ENCODE measurements at regions of chr12 and their contacts with region 1.

Region 1: DNA sequence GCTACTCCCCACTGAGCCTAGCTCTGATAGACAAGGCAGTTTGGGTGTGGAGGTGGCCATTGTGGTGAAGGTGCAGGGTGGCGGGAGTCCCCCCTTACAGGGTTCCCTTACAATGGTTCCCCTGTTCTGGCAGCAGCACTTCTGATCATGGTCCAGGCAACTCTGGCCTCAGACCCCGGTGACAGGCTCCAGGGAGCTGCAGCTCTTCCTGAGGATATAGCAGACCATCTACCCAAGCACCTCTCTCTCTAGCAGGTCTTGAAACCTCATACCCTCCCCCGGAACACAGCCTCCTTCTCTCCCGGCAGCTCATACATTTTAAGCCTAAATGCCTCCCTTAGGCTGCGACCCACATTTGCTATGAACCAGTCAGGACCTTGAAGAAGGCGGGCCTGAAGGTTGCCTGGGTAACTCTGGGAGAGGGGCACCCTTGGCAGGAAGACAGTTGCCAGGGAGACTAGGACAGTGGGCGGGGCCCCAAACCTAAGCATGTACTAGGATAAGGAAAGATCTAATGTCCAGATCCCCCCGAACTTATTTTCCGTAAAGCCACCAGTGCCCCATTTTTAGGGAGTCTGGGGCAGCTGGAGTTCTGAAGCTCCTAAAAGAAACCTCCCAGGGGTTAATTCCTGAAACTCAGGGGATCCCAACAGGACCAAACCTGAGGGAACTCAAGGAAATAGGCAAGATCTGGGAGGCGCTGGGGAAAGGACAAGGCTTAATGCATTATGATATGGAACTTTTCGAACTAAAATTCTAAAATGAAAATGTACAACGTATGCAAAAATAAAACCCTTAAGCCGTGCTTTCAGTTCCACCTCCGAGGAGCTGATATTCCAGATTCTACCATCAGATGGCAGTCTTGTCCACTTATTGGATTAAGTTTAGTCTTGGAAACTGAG is 4.5 kb upstream of the GDF11 start:
- DNase-seq: peak; percentile 96
- H3K4me3 ChIP-seq: peak overlapping the region; percentile 72
- H3K27ac ChIP-seq: peak overlapping the region; percentile 66
- H3K4me1 ChIP-seq: peaks cover 26% of the 10 kb centered on the region
- CTCF ChIP-seq: peak; percentile 94

Region 2: GRCh38 chr12:54935235-54935951 is 803.0 kb before region 1 on chr12:
- CTCF ChIA-PET with region 1: no interaction called
- POLR2A ChIA-PET with region 1: no interaction called
- intact Hi-C with region 1: no loop called
- DNase-seq: peak; percentile 41
- H3K4me3 ChIP-seq: no peak overlapping the region
- H3K27ac ChIP-seq: no peak overlapping the region
- H3K4me1 ChIP-seq: peaks cover 13% of the 10 kb centered on the region
- CTCF ChIP-seq: peak; percentile 27; the same call in 1 of the 2 replicates

Region 3: GRCh38 chr12:55659486-55660385 is 78.6 kb before region 1 on chr12:
- CTCF ChIA-PET with region 1: no interaction called
- POLR2A ChIA-PET with region 1: no interaction called
- intact Hi-C with region 1: loop called (anchors 1 kb)
- DNase-seq: peak; percentile 61
- H3K4me3 ChIP-seq: no peak overlapping the region
- H3K27ac ChIP-seq: no peak overlapping the region
- H3K4me1 ChIP-seq: no peaks in the 10 kb centered on the region
- CTCF ChIP-seq: peak; percentile 84

Region 4: DNA sequence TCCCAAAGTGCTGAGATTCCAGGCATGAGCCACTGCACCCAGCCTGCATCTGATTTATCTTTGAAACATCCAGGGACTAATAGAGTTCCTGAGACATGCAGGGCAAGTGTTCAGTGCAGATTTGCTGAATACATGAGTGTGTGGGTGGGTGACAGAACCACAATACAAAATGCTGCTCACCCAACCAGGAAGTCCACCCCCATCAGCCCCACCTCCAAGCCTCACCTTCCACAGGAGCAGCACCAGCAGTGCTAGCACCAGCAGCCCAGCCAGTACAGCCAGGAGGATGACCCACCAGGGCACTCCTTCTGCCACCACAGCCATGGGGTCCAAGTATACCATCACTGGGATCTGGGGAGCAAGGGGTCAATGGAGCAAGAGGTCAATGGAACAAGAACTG is 50.6 kb before region 1 on chr12:
- CTCF ChIA-PET with region 1: no interaction called
- POLR2A ChIA-PET with region 1: no interaction called
- intact Hi-C with region 1: no loop called
- DNase-seq: no peak
- H3K4me3 ChIP-seq: no peak overlapping the region
- H3K27ac ChIP-seq: no peak overlapping the region
- H3K4me1 ChIP-seq: peaks cover 3% of the 10 kb centered on the region
- CTCF ChIP-seq: no peak

Region 5: DNA sequence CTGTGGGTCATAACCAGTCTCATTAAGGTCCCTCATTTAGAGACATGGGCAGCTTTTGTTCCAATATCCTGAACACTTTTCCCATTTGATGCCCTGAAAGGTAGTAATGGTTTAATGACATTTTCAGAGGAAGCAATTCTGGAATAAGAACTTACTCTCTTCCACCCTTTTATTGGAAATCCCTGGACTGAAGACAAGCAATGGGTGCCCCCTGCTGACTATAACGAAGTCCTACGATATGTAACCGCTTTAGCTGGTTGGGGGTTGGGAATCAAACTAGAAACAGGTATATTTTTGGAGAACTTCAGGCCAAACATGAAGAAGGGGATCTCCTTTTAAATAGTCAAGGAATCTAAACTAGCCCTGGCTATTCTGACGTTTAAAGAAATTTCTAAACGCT is 58.7 kb after region 1 on chr12:
- CTCF ChIA-PET with region 1: interaction called, 5 read pairs
- POLR2A ChIA-PET with region 1: interaction called, 6 read pairs
- intact Hi-C with region 1: loop called (anchors 1 kb)
- DNase-seq: peak; percentile 57
- H3K4me3 ChIP-seq: no peak overlapping the region
- H3K27ac ChIP-seq: no peak overlapping the region
- H3K4me1 ChIP-seq: no peaks in the 10 kb centered on the region
- CTCF ChIP-seq: peak; percentile 80

Region 6: DNA sequence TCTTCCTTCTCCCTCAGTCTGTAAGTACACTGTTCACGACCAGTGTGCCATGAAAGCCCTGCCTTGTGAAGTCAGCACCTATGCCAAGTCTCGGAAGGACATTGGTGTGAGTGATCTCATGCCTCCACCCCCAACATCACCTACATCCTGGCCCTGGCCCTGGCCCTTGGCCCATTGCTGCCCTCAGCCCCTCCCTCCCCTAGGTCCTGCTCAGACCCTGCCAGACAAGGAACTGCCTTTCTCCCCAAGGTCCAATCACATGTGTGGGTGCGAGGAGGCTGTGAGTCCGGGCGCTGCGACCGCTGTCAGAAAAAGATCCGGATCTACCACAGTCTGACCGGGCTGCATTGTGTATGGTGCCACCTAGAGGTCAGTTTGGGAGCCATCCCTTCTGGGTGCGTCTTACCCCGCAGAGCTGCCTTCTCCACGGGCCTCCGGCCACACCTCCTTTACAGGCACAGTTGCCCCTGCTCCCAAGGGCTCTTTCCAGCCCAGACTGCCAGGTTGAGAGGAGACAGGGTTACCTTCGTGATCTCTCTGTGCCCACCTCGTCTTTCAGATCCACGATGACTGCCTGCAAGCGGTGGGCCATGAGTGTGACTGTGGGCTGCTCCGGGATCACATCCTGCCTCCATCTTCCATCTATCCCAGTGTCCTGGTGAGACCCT is 201.8 kb after region 1 on chr12:
- CTCF ChIA-PET with region 1: no interaction called
- POLR2A ChIA-PET with region 1: no interaction called
- intact Hi-C with region 1: loop called (anchors 1 kb)
- DNase-seq: peak; percentile 88
- H3K4me3 ChIP-seq: no peak overlapping the region
- H3K27ac ChIP-seq: peak overlapping the region; percentile 36
- H3K4me1 ChIP-seq: peaks cover 16% of the 10 kb centered on the region
- CTCF ChIP-seq: peak; percentile 95

Region 7: DNA sequence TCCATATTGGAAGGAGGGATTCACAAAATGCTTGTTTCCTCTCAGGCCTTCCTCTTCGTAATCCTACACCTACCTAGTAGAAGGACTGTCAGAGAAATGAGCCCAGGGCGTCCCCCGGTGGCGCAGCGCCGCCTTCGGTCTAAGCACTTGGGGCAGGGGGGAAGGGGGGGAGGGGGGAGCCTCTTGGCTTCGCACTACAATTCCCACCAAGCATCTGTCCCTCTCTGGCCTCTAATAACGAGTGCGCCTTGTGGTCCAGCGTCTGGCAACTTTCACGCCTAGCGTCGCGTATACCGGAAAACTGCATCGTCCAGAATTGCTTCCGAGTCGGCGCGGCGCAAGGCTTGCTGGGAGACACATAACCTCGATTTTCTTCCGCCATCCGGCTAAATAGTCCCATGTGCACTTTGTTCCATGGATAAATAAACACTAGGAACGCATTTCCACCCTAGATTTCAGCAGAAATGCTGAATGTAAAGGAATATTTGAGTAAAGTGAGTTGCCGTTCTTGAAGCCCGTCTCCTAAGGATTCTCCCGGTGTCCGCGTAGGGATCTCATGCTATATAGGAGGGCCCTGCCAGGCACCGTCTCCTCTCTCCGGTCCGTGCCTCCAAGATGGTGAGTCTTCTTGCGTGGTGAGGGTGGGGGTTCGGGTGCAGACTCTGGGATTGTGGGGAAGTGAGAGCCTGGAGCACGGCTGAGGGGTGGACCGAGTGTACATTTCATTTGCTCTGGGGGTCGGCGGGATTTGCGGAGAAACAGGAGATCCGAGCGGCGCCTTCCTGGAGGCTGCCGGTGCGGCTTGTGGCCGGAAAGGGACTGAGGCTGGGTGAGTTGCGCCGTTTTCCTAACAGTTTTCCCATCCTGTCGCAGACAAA is 303.4 kb after region 1 on chr12 and contains the start of gene RPS26:
- CTCF ChIA-PET with region 1: interaction called, 6 read pairs
- POLR2A ChIA-PET with region 1: interaction called, 6 read pairs
- intact Hi-C with region 1: loop called (anchors 1 kb)
- DNase-seq: peak; percentile 100
- H3K4me3 ChIP-seq: peak within 1 kb of the TSS; percentile 83
- H3K27ac ChIP-seq: peak within 1 kb of the TSS; percentile 67
- H3K4me1 ChIP-seq: peaks cover 43% of the 10 kb centered on the region
- CTCF ChIP-seq: peak; percentile 77
- total RNA-seq, gene RPS26: 306 and 600 TPM in 2 replicates